ENCODE measurements at regions of chr11 and their contacts with region 1.

Region 1: GRCh38 chr11:910589-911195 is at the start of gene CHID1:
- DNase-seq: peak; percentile 89
- H3K4me3 Mint-ChIP-seq: peak within 1 kb of the TSS; percentile 96
- H3K27ac Mint-ChIP-seq: peak within 1 kb of the TSS; percentile 93
- H3K4me1 Mint-ChIP-seq: peaks cover 18% of the 10 kb centered on the region
- H3K27me3 Mint-ChIP-seq: no peaks in the 10 kb centered on the region
- total RNA-seq, gene CHID1: 108 and 110 TPM in 2 replicates

Region 2: GRCh38 chr11:809287-810039 is 101.2 kb before region 1 on chr11 and contains the start of gene RPLP2:
- intact Hi-C with region 1: loop called (anchors 1 kb)
- DNase-seq: peak; percentile 97
- H3K4me3 Mint-ChIP-seq: peak within 1 kb of the TSS; percentile 92
- H3K27ac Mint-ChIP-seq: peak within 1 kb of the TSS; percentile 90
- H3K4me1 Mint-ChIP-seq: peaks cover 28% of the 10 kb centered on the region
- H3K27me3 Mint-ChIP-seq: no peaks in the 10 kb centered on the region
- total RNA-seq, gene RPLP2: 2,072 and 2,148 TPM in 2 replicates

Region 3: GRCh38 chr11:842370-843002 is 68.2 kb before region 1 on chr11 and contains the starts of genes POLR2L and TSPAN4:
- intact Hi-C with region 1: loop called (anchors 2 kb)
- DNase-seq: peak; percentile 82
- H3K4me3 Mint-ChIP-seq: peak within 1 kb of the TSS; percentile 89
- H3K27ac Mint-ChIP-seq: peak within 1 kb of the TSS; percentile 73
- H3K4me1 Mint-ChIP-seq: peaks cover 16% of the 10 kb centered on the region
- H3K27me3 Mint-ChIP-seq: peaks cover 2% of the 10 kb centered on the region
- total RNA-seq, gene POLR2L: 114 and 126 TPM in 2 replicates
- total RNA-seq, gene TSPAN4: 12.8 and 13.9 TPM in 2 replicates

Region 4: DNA sequence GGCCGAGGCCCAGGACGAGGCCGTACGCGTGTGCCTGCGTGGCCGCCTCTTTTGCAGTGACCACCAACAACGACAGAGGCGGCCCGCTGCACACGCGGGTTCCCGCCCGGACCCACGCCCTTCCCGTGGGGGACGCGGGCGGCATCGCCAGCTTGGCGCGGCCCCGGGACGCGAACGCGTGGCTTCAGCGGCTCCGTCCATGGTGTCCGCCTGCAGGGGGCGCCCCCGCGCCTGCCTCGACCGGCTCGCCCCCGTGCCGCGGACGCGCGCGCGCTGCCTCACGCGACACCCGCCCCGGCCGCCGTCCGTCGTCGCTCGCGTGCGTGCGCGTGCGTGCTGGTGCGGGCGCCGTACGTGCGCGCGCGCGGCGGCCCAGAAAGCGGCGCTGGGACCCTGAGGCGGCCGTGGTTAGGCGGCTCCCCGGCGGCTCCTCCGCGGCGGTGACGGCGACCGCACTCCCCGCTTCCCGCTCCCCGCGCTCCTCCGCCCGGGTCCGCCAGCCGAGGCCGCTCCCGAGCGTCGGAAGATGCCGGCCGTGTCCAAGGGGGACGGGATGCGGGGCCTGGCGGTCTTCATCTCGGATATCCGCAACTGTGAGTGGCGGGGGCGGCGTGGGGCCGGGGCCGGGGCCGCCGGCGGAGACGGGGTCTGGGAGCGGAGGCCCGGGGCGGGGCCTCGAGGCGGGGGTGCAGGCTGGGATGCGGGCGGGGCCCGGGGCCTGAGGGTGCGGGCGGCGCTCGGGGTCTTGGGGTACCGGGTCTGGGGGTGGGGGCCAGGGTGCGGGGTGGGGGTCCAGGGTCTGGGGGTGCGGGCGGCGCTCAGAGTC is 15.0 kb after region 1 on chr11 and contains the start of gene AP2A2:
- intact Hi-C with region 1: loop called (anchors 1 kb)
- DNase-seq: peak; percentile 90
- H3K4me3 Mint-ChIP-seq: peak within 1 kb of the TSS; percentile 85
- H3K27ac Mint-ChIP-seq: peak within 1 kb of the TSS; percentile 71
- H3K4me1 Mint-ChIP-seq: peaks cover 28% of the 10 kb centered on the region
- H3K27me3 Mint-ChIP-seq: no peaks in the 10 kb centered on the region
- total RNA-seq, gene AP2A2: 49.7 and 60.4 TPM in 2 replicates

Region 5: GRCh38 chr11:970319-970871 is 59.7 kb after region 1 on chr11:
- intact Hi-C with region 1: no loop called
- DNase-seq: no peak
- H3K4me3 Mint-ChIP-seq: peak overlapping the region; percentile 5
- H3K27ac Mint-ChIP-seq: peak overlapping the region; percentile 42
- H3K4me1 Mint-ChIP-seq: peaks cover 18% of the 10 kb centered on the region
- H3K27me3 Mint-ChIP-seq: no peaks in the 10 kb centered on the region

Region 6: GRCh38 chr11:1050581-1051355 is 140.1 kb after region 1 on chr11:
- intact Hi-C with region 1: loop called (anchors 2 kb)
- DNase-seq: peak; percentile 63
- H3K4me3 Mint-ChIP-seq: no peak overlapping the region
- H3K27ac Mint-ChIP-seq: no peak overlapping the region
- H3K4me1 Mint-ChIP-seq: no peaks in the 10 kb centered on the region
- H3K27me3 Mint-ChIP-seq: peaks cover 8% of the 10 kb centered on the region

Measured in activated T-helper 1 cell treated with anti-CD3 and anti-CD28 coated beads, Interleukin-12 subunit alpha, Interleukin-12 subunit beta, Interleukin-2, Interleukin-4 antibody, amounts not matched to agents 30 ng/mL and 10 ng/mL and 1 ng/mL, durations not matched to agents 14 hours and 24 hours and 36 hours (primary cell).